ENCODE measurements at regions of chr2 and their contacts with region 1.

Region 1: GRCh38 chr2:176096986-176097819 is 2.4 kb upstream of the HOXD12 start:
- DNase-seq: peak; percentile 62 to 89
- ATAC-seq: peak; percentile 83
- H3K4me3 ChIP-seq: no peak overlapping the region
- H3K27ac ChIP-seq: no peak overlapping the region
- H3K4me1 ChIP-seq: no peaks in the 10 kb centered on the region
- H3K27me3 ChIP-seq: no peaks in the 10 kb centered on the region

Region 2: DNA sequence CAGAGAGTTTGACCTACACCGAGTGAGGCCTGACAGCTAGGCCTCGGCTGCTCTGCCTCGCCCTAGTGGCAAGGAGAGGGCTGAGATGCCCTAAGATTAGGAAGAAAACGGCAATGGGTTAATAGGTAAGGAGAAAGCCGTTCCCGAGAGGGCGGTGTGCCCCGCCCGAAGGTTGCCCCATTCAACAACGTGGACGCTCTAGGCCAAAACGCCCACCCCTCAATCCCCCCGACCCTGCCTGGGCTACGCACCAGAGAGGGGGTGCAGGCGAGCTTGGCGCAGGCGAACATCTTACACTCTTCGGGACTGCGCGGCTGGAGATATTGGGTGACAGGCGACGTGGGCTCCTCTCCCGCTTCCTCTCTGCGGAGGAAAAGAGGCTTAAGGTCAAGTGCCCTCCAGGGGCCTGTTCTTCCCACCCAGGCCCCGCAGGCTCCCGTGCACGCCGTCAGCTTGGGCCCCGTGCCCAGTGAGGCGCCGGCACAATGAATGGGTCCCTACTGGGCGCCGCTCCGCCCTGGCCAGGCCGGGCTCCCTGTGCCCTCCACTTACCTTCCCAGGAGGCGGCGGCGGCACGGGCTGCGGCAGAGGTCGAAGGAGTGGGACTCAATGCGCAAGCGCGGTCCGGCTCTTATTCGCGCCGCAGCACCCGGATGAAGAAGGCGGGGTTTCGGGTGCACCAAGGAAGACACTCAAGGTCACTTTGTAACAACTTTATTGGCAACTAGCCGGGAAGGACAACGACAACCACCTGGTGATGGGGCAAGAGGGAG is 915.9 kb before region 1 on chr2 and contains the start of gene ATP5MC3:
- intact Hi-C with region 1: loop called in 1 of 2 experiments (anchors 10 kb)
- DNase-seq: peak; percentile 96 to 98
- ATAC-seq: peak; percentile 97
- H3K4me3 ChIP-seq: peak within 1 kb of the TSS; percentile 38 to 79
- H3K27ac ChIP-seq: peak within 1 kb of the TSS; percentile 49 to 65
- H3K4me1 ChIP-seq: no peaks in the 10 kb centered on the region
- H3K27me3 ChIP-seq: no peaks in the 10 kb centered on the region
- total RNA-seq, gene ATP5MC3: 89.7 to 89.9 TPM

Region 3: GRCh38 chr2:175251425-175252041 is 845.7 kb before region 1 on chr2:
- intact Hi-C with region 1: loop called in 1 of 2 experiments (anchors 5 kb)
- DNase-seq: no peak
- ATAC-seq: no peak
- H3K4me3 ChIP-seq: no peak overlapping the region
- H3K27ac ChIP-seq: no peak overlapping the region
- H3K4me1 ChIP-seq: no peaks in the 10 kb centered on the region
- H3K27me3 ChIP-seq: no peaks in the 10 kb centered on the region

Region 4: DNA sequence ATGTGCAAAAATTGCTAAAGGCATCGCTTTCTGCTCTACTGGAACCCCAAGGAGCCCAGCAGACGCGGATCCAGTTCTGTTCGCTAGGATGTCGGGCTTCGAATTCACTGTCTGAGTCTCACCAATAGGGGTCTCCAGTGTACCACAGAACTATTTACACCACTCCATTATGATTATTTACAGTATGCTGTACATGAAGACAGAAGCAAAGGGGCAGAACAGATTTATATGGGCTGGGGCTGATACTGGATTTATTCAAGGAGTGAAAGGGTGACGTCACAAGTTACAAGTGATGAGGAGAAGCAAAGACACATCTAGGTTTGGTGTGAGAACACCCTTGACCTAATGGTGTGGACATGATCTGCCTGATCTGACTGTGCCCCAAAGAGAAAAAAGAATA is 730.4 kb before region 1 on chr2:
- intact Hi-C with region 1: loop called in 1 of 2 experiments (anchors 5 kb)
- DNase-seq: no peak
- ATAC-seq: peak; percentile 74
- H3K4me3 ChIP-seq: no peak overlapping the region
- H3K27ac ChIP-seq: no peak overlapping the region
- H3K4me1 ChIP-seq: no peaks in the 10 kb centered on the region
- H3K27me3 ChIP-seq: no peaks in the 10 kb centered on the region

Region 5: DNA sequence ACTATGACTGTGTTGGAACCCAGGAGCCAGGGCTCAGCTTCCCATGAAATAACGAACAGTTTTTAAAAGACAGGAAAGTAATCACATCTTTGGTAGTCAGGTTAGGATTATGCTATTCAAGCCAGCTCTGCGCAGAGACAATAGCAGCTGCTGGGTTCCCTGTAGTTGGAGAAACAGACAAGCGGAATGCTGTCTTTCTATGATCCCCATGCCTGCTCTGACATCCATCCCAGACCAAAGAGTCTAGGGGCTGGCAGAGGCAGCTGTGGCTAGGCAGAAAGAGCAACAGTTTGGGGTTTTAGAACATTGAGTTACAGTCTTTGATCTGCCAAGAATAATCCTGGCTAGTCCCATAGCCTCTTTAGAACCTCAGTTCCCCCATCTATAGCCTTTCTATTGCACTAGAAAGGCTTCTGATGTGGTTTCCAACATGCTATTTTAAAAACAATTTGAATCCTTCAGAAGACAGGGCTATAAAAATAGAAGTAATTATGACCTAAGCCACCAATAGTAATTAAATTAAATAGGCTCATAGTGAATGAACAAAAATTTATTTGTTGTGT is 318.8 kb after region 1 on chr2:
- intact Hi-C with region 1: no loop called
- DNase-seq: no peak
- ATAC-seq: no peak
- H3K4me3 ChIP-seq: no peak overlapping the region
- H3K27ac ChIP-seq: no peak overlapping the region
- H3K4me1 ChIP-seq: no peaks in the 10 kb centered on the region
- H3K27me3 ChIP-seq: no peaks in the 10 kb centered on the region

Region 6: DNA sequence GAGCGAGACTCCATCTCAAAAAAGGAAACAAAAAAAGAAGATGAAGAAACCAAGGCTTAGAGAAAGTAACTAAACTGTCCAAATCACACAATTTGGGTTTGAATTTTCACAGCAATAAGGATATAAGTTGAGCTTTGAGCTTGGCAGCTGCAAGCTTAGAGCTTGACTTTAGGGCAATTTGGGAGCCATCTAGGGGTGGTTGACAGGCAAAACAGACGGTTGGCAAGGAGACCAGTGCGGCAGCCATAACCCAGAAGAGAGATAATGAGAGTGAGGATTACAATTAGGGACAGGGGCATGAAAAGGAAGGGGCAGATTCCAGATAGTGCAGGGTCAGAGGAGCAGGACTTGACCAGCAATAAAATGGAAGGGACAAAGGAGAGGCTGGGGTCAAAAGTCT is 733.2 kb after region 1 on chr2:
- intact Hi-C with region 1: no loop called
- DNase-seq: no peak
- ATAC-seq: no peak
- H3K4me3 ChIP-seq: no peak overlapping the region
- H3K27ac ChIP-seq: no peak overlapping the region
- H3K4me1 ChIP-seq: peaks cover 0 to 2% of the 10 kb centered on the region in 2 donors
- H3K27me3 ChIP-seq: no peaks in the 10 kb centered on the region

Measured in aorta (tissue), 5 donors.